Spleen (tissue), 13 donors: ENCODE measurements at regions of chr6 and their contacts with region 1.

Region 1: DNA sequence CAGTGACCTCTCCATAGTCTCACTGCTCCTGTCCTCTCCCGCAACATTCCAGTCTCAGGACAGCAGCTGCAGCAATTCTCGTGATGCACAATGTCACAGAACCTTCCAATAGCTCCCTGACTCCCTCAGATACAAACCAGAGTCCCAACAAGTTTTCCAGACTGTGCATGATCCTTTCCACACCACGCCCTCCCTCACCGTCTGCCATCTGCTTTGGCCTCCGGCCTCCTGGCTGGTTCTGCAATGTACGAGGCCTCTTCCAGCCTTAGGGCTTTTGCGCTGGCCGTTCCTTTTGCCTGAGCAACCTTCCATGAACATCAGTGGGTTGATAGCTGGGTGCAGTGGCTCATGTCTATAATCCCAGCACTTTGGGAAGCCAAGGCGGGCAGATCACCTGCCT is 9.6 kb downstream of the FNDC1 start:
- DNase-seq: no peak
- H3K4me3 ChIP-seq: no peak overlapping the region
- H3K27ac ChIP-seq: no peak overlapping the region
- H3K4me1 ChIP-seq: peaks cover 0 to 8% (median 5%) of the 10 kb centered on the region in 6 donors
- H3K27me3 ChIP-seq: peaks cover 0 to 12% (median 8%) of the 10 kb centered on the region in 7 donors
- CTCF ChIP-seq: no peak
- POLR2A ChIP-seq: no peak

Region 2: GRCh38 chr6:159654483-159655098 is 475.7 kb after region 1 on chr6:
- intact Hi-C with region 1: loop called (anchors 5 kb)
- DNase-seq: no peak
- H3K4me3 ChIP-seq: no peak overlapping the region
- H3K27ac ChIP-seq: no peak overlapping the region
- H3K4me1 ChIP-seq: no peaks in the 10 kb centered on the region
- H3K27me3 ChIP-seq: no peaks in the 10 kb centered on the region
- CTCF ChIP-seq: peak in 9 of 11 experiments; percentile 3 to 63 (median 52)
- POLR2A ChIP-seq: no peak